Upper lobe of right lung (tissue), 1 donor: ENCODE measurements at regions of chr17 and their contacts with region 1.

Region 1: DNA sequence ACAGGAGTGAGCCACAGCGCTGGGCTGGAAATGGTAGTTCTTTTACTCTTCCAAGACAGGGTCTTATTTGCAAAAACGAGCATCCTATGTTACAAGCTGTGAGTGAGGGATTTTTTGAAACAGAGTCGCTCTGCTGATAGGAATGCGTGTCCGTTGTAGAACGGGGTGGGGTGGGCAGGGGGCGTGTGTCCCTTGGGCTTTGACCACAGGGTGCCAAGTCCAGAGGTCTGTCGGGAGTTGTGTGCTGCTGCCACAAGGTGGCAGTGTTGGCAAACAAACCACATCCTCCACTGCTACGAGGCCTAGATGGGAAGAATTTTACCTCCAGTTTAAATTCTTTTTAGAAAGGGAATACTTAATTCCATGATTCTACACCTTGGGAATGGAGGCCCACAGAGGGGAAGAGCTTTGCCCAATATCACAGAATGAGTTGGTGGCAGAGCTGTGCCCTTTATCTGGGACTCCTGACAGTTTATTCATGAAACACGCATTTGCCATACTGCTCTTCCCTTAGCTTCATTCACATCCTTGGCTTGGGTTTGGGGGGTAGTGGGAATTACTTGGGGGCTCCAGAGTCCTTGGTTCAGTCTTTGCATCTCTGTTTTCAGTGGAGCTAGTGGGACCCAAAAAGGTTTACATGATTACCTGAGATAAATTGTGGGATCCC is 30.6 kb upstream of the ETV4 start:
- DNase-seq: peak; percentile 76
- ATAC-seq: peak; percentile 87
- H3K4me3 ChIP-seq: no peak overlapping the region
- H3K27ac ChIP-seq: no peak overlapping the region
- H3K4me1 ChIP-seq: peaks cover 14% of the 10 kb centered on the region
- H3K27me3 ChIP-seq: no peaks in the 10 kb centered on the region
- CTCF ChIP-seq: peak; percentile 90

Region 2: DNA sequence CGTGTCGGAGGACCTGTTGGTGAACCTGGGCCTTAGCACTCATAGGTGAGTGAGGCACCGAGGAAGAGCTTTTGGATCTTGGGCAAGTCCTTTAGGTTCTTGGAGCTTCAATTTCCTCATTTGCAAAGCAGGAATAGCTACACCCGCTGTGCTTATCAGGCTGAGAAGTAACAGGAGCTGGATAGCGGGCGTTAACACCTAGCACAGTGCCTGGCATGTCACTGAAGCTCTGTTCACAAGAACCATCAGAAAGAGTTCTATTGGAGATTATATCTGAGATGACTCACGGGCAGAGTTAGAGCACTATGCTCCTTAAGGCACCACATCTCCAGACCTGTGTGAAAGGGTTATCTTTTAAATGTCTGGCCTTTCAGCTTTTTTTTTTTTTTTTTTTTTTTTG is 72.2 kb after region 1 on chr17:
- intact Hi-C with region 1: no loop called
- DNase-seq: no peak
- ATAC-seq: no peak
- H3K4me3 ChIP-seq: no peak overlapping the region
- H3K27ac ChIP-seq: no peak overlapping the region
- H3K4me1 ChIP-seq: no peaks in the 10 kb centered on the region
- H3K27me3 ChIP-seq: no peaks in the 10 kb centered on the region
- CTCF ChIP-seq: no peak

Region 3: GRCh38 chr17:43673516-43674323 is 97.0 kb after region 1 on chr17:
- intact Hi-C with region 1: loop called (anchors 2 kb)
- DNase-seq: peak; percentile 73
- ATAC-seq: peak; percentile 77
- H3K4me3 ChIP-seq: no peak overlapping the region
- H3K27ac ChIP-seq: no peak overlapping the region
- H3K4me1 ChIP-seq: peaks cover 4% of the 10 kb centered on the region
- H3K27me3 ChIP-seq: no peaks in the 10 kb centered on the region
- CTCF ChIP-seq: peak; percentile 93